ENCODE measurements at regions of chr14 and their contacts with region 1.

Region 1: GRCh38 chr14:90301668-90302090 is 30.1 kb downstream of the NRDE2 start:
- DNase-seq: no peak
- ATAC-seq: no peak
- H3K4me3 Mint-ChIP-seq: no peak overlapping the region
- H3K27ac Mint-ChIP-seq: no peak overlapping the region
- H3K4me1 Mint-ChIP-seq: peaks cover 9% of the 10 kb centered on the region
- H3K27me3 Mint-ChIP-seq: no peaks in the 10 kb centered on the region

Region 2: DNA sequence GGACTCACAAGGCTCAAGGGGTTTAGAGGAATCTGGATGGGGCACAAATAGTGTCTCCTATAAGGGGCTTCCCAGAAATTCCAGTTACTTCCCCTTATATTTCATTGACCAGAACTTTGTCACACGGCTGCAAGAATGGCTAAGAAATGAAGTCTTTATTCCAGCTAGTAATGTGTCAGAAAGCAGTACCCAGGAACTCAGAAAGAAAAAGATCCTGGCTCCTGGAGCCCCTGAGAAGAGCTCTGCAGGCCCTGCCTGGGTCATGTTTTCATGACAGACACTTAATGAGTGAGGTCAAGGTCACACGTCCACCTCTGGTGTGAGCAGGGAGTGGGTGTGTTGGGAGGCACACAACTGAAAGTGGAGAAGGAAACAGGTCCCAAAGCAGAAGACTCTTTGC is 222.1 kb before region 1 on chr14:
- CTCF ChIA-PET with region 1: no interaction called
- POLR2A ChIA-PET with region 1: no interaction called
- intact Hi-C with region 1: no loop called
- DNase-seq: no peak
- ATAC-seq: no peak
- H3K4me3 Mint-ChIP-seq: no peak overlapping the region
- H3K27ac Mint-ChIP-seq: no peak overlapping the region
- H3K4me1 Mint-ChIP-seq: no peaks in the 10 kb centered on the region
- H3K27me3 Mint-ChIP-seq: peaks cover 28% of the 10 kb centered on the region

Region 3: DNA sequence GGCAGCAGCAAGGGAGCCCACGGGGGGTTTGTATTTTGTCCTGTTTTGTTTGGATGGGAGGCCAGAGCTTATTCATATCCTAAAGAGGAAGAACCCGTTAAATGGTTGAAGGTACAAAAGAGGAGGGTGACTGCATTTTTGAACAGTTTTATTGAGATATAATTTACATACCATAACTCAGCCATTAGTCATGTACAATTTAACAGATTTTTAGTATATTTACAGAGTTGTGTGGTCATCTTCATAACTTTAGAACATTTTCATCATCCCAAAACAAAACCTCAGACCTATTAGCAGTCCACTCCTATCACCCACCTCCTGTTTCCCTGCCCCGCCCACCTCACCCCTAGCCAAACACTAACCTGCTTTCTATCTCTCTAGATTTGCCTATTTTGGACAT is 17.5 kb after region 1 on chr14:
- CTCF ChIA-PET with region 1: interaction called, 7 read pairs
- POLR2A ChIA-PET with region 1: interaction called, 10 read pairs
- intact Hi-C with region 1: no loop called
- DNase-seq: no peak
- ATAC-seq: no peak
- H3K4me3 Mint-ChIP-seq: no peak overlapping the region
- H3K27ac Mint-ChIP-seq: no peak overlapping the region
- H3K4me1 Mint-ChIP-seq: peaks cover 32% of the 10 kb centered on the region
- H3K27me3 Mint-ChIP-seq: no peaks in the 10 kb centered on the region

Region 4: DNA sequence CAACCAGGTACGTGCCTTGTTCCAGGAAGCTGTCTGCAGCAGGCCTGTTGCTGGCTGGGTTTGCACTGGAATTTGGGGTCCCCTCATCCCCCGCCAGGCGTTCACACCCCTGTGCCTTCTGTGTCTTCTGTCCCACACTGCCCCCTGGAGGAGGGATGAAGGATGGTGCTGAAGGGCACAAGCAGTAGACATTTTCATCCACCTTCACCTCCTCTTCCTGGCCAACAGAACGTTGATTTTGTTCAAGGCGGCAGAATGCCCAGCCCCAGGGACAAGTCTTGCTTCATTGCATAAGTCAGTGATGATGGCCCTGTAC is 217.2 kb after region 1 on chr14:
- CTCF ChIA-PET with region 1: interaction called, 5 read pairs
- POLR2A ChIA-PET with region 1: no interaction called
- intact Hi-C with region 1: loop called (anchors 1 to 5 kb)
- DNase-seq: peak; percentile 68
- ATAC-seq: peak; percentile 76
- H3K4me3 Mint-ChIP-seq: no peak overlapping the region
- H3K27ac Mint-ChIP-seq: no peak overlapping the region
- H3K4me1 Mint-ChIP-seq: no peaks in the 10 kb centered on the region
- H3K27me3 Mint-ChIP-seq: no peaks in the 10 kb centered on the region

Region 5: GRCh38 chr14:91737619-91738018 is 1435.9 kb after region 1 on chr14:
- CTCF ChIA-PET with region 1: no interaction called
- POLR2A ChIA-PET with region 1: no interaction called
- intact Hi-C with region 1: no loop called
- DNase-seq: no peak
- ATAC-seq: no peak
- H3K4me3 Mint-ChIP-seq: no peak overlapping the region
- H3K27ac Mint-ChIP-seq: no peak overlapping the region
- H3K4me1 Mint-ChIP-seq: peaks cover 8% of the 10 kb centered on the region
- H3K27me3 Mint-ChIP-seq: no peaks in the 10 kb centered on the region

Measured in activated CD4-positive, alpha-beta T cell treated with anti-CD3 and anti-CD28 coated beads for 36 hours (primary cell).